ENCODE measurements at regions of chr1 and their contacts with region 1.

Region 1: GRCh38 chr1:198253668-198254067 is 96.9 kb downstream of the NEK7 start:
- DNase-seq: peak; percentile 58
- H3K4me3 Mint-ChIP-seq: peak overlapping the region; percentile 21
- H3K27ac Mint-ChIP-seq: peak overlapping the region; percentile 83
- H3K4me1 Mint-ChIP-seq: peaks cover 29% of the 10 kb centered on the region
- H3K27me3 Mint-ChIP-seq: no peaks in the 10 kb centered on the region

Region 2: DNA sequence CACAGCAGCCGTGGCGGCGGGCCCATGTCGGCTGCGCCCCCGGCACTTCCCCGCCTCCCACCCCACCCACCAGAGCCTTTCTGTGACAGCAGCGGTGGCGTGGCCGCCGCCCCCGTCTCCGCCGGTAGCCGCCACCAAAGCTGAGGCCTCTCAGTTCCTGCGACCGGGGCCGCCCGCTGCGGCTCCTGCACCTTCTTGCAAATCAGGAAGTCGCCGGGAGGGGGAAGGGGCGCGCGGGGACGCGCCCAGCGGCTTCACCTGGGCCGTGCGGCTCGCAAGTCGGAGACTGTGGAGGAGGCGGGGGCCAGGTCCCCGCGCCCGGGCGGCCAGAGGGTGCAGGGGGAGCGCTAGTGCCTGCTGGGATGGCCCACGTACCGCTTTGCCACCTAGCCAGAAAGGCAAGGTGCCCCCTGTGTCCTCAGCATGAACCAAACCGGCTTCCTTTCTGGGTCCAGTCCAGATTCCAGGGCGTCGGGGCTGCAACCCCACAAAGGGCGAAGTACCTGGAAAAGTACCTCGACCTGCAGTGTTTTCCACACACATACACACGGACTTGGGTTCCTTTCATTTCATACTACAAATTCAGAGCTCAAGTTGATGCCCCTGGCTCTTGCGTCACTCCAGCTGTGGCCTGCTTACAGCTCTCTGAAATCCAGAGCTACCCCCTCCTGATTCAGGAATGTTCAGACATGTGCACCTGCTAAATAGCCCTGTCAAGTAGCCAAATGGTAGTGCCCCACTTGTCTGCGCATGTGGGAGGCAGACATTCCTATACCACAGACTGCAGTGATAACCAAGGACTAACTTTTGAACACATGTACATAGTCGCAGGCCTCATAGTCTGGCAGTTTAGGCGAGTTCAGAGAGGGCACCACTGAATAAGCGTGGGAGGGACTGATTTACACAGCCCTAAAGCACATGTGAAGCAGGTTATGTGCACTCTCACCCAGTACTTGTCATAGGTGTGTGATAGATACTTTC is 478.1 kb before region 1 on chr1 and contains the start of gene DENND1B:
- intact Hi-C with region 1: loop called (anchors 1 kb)
- DNase-seq: peak; percentile 95
- H3K4me3 Mint-ChIP-seq: peak within 1 kb of the TSS; percentile 89
- H3K27ac Mint-ChIP-seq: peak within 1 kb of the TSS; percentile 99
- H3K4me1 Mint-ChIP-seq: peaks cover 61% of the 10 kb centered on the region
- H3K27me3 Mint-ChIP-seq: no peaks in the 10 kb centered on the region
- total RNA-seq, gene DENND1B: 15.0 and 16.8 TPM in 2 replicates

Region 3: GRCh38 chr1:198088360-198089071 is 165.2 kb before region 1 on chr1:
- intact Hi-C with region 1: loop called (anchors 5 kb)
- DNase-seq: peak; percentile 68
- H3K4me3 Mint-ChIP-seq: no peak overlapping the region
- H3K27ac Mint-ChIP-seq: no peak overlapping the region
- H3K4me1 Mint-ChIP-seq: peaks cover 6% of the 10 kb centered on the region
- H3K27me3 Mint-ChIP-seq: peaks cover 3% of the 10 kb centered on the region

Region 4: GRCh38 chr1:198185759-198186158 is 67.9 kb before region 1 on chr1:
- intact Hi-C with region 1: loop called (anchors 1 kb)
- DNase-seq: no peak
- H3K4me3 Mint-ChIP-seq: peak overlapping the region; percentile 66
- H3K27ac Mint-ChIP-seq: peak overlapping the region; percentile 58
- H3K4me1 Mint-ChIP-seq: peaks cover 48% of the 10 kb centered on the region
- H3K27me3 Mint-ChIP-seq: no peaks in the 10 kb centered on the region

Region 5: DNA sequence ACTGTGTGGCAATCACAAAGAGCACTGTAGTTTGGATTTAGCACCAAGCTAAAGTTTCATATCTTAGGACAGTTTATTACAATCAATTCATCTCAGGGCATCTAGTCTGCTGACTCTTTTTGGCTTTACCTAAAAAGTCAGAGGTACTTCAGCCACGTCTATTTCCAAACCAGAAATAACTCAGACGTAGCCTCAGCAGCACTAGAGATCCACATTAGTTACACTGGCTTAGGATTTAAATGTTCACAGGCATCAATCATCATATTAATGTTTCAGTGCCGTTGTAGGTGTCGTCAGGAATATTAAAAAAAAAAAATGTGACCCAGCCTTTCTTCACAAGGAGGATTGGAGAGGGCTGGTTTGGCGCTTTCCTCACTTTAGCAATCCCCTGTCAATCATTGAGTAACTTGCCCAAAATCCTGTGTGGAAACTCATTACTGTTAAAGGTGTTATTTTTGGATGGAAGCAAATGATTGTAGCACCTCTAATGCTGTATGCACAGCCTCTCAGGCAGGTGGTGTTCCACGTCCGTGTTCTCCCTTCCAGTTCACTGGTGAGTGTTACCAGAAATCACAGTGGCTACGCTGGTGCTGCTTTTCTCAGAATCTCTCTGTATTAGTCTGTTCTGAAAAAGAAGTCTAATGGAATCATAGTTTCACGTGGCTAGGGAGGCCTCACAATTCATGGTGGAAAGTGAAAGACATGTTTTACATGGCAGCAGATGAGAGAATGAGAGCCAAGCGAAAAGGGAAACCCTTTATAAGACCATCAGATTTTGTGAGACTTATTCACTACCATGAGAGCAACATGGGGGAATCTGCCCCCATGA is 51.5 kb before region 1 on chr1:
- intact Hi-C with region 1: loop called (anchors 2 kb)
- DNase-seq: peak; percentile 73
- H3K4me3 Mint-ChIP-seq: peak overlapping the region; percentile 68
- H3K27ac Mint-ChIP-seq: peak overlapping the region; percentile 86
- H3K4me1 Mint-ChIP-seq: peaks cover 49% of the 10 kb centered on the region
- H3K27me3 Mint-ChIP-seq: no peaks in the 10 kb centered on the region

Region 6: GRCh38 chr1:198295971-198296370 is 42.3 kb after region 1 on chr1:
- intact Hi-C with region 1: no loop called
- DNase-seq: no peak
- H3K4me3 Mint-ChIP-seq: no peak overlapping the region
- H3K27ac Mint-ChIP-seq: no peak overlapping the region
- H3K4me1 Mint-ChIP-seq: no peaks in the 10 kb centered on the region
- H3K27me3 Mint-ChIP-seq: no peaks in the 10 kb centered on the region

Region 7: DNA sequence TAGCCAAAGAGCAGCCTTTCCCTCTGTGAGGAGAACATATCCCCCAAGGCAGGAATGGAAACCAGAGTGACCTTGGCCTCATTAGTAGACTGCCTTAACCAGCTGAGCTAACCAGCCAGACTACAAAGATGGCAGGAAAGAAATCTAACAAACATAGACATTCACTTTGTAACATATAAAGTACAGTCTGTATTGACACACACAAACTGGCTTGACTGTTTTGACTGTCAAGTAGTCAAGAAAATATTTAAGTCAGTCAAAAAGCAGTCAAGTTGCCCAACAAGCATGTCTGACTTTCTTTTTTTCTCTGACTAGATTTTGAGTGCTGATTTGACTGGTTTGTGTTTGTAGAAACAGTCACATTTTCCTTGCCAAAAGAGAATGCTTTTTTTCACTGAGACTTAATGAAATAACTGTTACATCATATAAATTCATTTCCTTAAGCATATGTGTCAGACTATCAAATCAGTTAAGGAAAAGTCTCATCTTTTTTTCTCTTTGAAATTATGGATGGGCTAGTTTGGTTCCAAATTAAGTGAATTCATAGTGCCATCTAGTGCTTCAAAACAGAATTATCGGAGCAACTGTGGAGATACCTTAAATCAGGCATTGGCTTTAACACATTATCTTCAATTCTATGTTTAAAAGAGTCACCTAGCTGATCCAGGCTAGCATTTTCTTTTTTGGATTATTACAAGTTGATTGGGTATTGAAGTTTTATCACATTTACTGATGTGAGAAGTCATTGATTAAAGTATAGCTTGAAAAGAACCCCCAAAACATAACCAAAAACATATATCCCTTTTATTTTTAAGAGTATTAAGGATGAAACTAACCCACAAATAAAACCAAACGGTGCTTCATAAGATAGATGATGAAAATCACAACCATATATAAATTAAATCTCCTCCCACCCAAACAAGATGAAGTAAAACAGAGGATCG is 211.8 kb after region 1 on chr1:
- intact Hi-C with region 1: loop called (anchors 10 kb)
- DNase-seq: peak; percentile 62
- H3K4me3 Mint-ChIP-seq: no peak overlapping the region
- H3K27ac Mint-ChIP-seq: no peak overlapping the region
- H3K4me1 Mint-ChIP-seq: peaks cover 4% of the 10 kb centered on the region
- H3K27me3 Mint-ChIP-seq: peaks cover 2% of the 10 kb centered on the region

Region 8: GRCh38 chr1:198612471-198613260 is 359.0 kb after region 1 on chr1:
- intact Hi-C with region 1: loop called (anchors 10 kb)
- DNase-seq: peak; percentile 58
- H3K4me3 Mint-ChIP-seq: peak overlapping the region; percentile 83
- H3K27ac Mint-ChIP-seq: peak overlapping the region; percentile 94
- H3K4me1 Mint-ChIP-seq: peaks cover 59% of the 10 kb centered on the region
- H3K27me3 Mint-ChIP-seq: no peaks in the 10 kb centered on the region